GM23248 (cell line): ENCODE measurements at regions of chr5 and their contacts with region 1.

Region 1: DNA sequence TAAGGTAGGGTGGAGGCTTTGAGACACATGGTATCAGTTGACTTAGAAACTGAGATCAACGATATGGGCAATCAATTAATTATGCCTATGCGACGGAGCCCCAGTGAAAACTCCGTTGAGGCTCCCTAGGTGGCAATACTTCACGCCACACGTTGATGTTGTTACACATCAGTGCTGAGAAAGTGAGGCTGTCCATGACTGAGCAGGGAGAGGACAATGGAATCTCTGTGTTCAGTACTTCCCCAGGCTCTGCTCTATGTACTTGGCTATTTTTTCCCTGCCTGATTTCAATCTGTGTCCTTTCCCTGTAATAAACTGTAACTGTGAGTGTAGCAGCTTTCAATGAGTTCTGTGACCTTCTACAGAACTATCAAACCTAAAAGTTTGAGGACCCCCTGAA is 211.7 kb downstream of the SNCAIP start:
- DNase-seq: no peak
- H3K4me3 ChIP-seq: no peak overlapping the region
- H3K27ac ChIP-seq: no peak overlapping the region
- H3K4me1 ChIP-seq: no peaks in the 10 kb centered on the region
- H3K27me3 ChIP-seq: no peaks in the 10 kb centered on the region

Region 2: GRCh38 chr5:122076664-122077365 is 447.0 kb before region 1 on chr5:
- in situ Hi-C with region 1: no loop called
- DNase-seq: peak; percentile 83
- H3K4me3 ChIP-seq: peak overlapping the region; percentile 94
- H3K27ac ChIP-seq: peak overlapping the region; percentile 96
- H3K4me1 ChIP-seq: peaks cover 48% of the 10 kb centered on the region
- H3K27me3 ChIP-seq: no peaks in the 10 kb centered on the region

Region 3: DNA sequence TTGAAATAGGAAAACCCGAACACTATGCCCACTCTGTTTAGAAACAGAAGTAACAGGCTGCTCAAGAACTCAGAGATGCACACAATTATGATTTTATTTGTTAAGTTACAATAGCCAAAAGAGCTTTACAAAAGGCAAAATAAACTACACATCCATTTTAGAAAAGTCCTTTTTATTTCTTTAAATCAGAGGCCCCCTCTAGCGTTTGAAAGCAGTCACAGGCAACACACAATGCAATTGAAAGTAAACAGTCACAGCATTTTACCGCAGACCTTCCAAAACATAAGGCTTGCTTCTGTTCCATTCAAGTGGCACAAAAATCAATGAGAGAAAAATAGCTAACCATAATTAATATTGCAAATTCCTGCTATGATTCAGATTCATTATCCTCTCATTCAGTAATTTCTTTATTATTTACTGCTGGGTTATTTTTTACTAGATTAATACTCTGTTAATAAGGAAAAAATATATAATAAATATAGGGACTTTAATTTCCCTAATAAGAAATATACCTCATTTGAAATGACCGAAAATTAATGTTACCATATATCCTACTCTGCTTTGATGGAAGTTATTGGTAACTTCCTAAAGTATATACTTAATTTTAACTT is 821.1 kb after region 1 on chr5:
- in situ Hi-C with region 1: loop called (anchors 10 kb)
- DNase-seq: peak; percentile 78
- H3K4me3 ChIP-seq: peak overlapping the region; percentile 36; the same call in 1 of the 2 replicates
- H3K27ac ChIP-seq: no peak overlapping the region
- H3K4me1 ChIP-seq: peaks cover 4% of the 10 kb centered on the region; the same call in 1 of the 2 replicates
- H3K27me3 ChIP-seq: no peaks in the 10 kb centered on the region